ENCODE measurements at regions of chr1 and their contacts with region 1.

Region 1: GRCh38 chr1:19882111-19883071 is at the start of gene OTUD3:
- DNase-seq: peak; percentile 87 to 97 (median 96)
- ATAC-seq: peak; percentile 100
- H3K4me3 ChIP-seq: peak within 1 kb of the TSS; percentile 66
- H3K4me3 Mint-ChIP-seq: peak within 1 kb of the TSS; percentile 77 to 95 (median 88)
- H3K27ac ChIP-seq: peak within 1 kb of the TSS; percentile 82
- H3K27ac Mint-ChIP-seq: peak within 1 kb of the TSS; percentile 3 to 88 (median 75)
- H3K4me1 ChIP-seq: peaks cover 15 to 23% of the 10 kb centered on the region in 2 donors
- H3K4me1 Mint-ChIP-seq: peaks cover 20 to 50% (median 47%) of the 10 kb centered on the region in 7 donors
- H3K27me3 ChIP-seq: no peaks in the 10 kb centered on the region
- H3K27me3 Mint-ChIP-seq: peaks cover 0 to 15% (median 6%) of the 10 kb centered on the region in 5 donors
- total RNA-seq, gene OTUD3: 13.1 to 23.6 (median 20.8) TPM

Region 2: GRCh38 chr1:19054216-19054615 is 828.2 kb before region 1 on chr1:
- CTCF ChIA-PET with region 1: no interaction called
- POLR2A ChIA-PET with region 1: no interaction called
- intact Hi-C with region 1: no loop called
- DNase-seq: no peak
- ATAC-seq: no peak
- H3K4me3 ChIP-seq: no peak overlapping the region
- H3K4me3 Mint-ChIP-seq: no peak overlapping the region
- H3K27ac ChIP-seq: no peak overlapping the region
- H3K27ac Mint-ChIP-seq: no peak overlapping the region
- H3K4me1 ChIP-seq: peaks cover 0 to 10% of the 10 kb centered on the region in 2 donors
- H3K4me1 Mint-ChIP-seq: peaks cover 2 to 17% (median 12%) of the 10 kb centered on the region in 7 donors
- H3K27me3 ChIP-seq: no peaks in the 10 kb centered on the region
- H3K27me3 Mint-ChIP-seq: peaks cover 17 to 56% (median 23%) of the 10 kb centered on the region in 5 donors

Region 3: GRCh38 chr1:19772053-19772452 is 110.3 kb before region 1 on chr1:
- CTCF ChIA-PET with region 1: no interaction called
- POLR2A ChIA-PET with region 1: no interaction called
- intact Hi-C with region 1: no loop called
- DNase-seq: no peak
- ATAC-seq: no peak
- H3K4me3 ChIP-seq: no peak overlapping the region
- H3K4me3 Mint-ChIP-seq: no peak overlapping the region
- H3K27ac ChIP-seq: no peak overlapping the region
- H3K27ac Mint-ChIP-seq: no peak overlapping the region
- H3K4me1 ChIP-seq: no peaks in the 10 kb centered on the region
- H3K4me1 Mint-ChIP-seq: peaks cover 0 to 2% (median 0%) of the 10 kb centered on the region in 7 donors
- H3K27me3 ChIP-seq: no peaks in the 10 kb centered on the region
- H3K27me3 Mint-ChIP-seq: no peaks in the 10 kb centered on the region

Region 4: DNA sequence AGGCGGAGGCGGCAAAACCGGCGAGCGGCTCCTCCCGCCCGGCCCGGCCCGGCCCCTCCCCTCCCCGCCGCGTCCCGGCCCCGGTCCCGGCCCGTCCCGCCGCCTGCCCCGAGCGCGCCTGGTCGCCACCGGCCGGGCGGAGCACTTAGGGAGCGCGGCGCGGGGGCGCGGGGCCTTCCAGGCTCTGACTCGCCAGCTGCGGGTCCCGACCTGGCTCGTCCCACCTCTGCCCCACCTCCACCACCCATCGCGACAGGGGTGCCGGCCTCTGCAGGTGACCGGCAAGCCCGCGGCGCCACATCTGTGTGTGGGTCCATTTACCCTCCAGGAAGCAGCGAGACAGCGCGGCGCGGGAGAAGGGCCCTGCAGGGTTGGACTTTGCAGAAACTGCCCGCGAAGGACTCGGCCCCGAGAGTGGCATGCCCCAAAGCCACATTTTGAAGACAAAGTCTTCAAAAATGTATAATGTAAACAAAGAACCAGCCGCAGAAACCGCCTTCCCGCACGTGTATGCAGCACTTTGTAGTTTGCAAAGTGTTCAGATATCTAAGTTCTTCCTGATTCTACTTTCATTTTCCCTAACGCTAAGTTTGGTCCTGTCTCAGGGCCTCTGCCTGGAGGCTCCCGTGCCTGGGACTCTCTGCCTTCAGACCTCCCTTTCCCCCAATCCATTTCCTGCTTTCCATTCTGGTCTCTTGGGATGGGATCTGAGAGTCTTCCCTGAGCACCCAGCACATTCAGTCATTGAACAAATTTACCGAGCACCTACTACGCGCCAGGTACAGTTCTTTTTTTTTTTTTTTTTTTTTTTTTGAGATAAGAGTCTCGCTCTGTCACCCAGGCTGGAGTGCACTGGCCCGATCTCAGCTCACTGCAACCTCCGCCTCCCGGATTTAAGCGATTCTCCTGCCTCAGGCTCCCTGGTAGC is 82.2 kb before region 1 on chr1 and contains the start of gene TMCO4:
- CTCF ChIA-PET with region 1: no interaction called
- POLR2A ChIA-PET with region 1: no interaction called
- intact Hi-C with region 1: loop called (anchors 1 to 5 kb)
- DNase-seq: peak in 8 of 9 donors; percentile 26 to 64 (median 58)
- ATAC-seq: peak; percentile 68
- H3K4me3 ChIP-seq: peak within 1 kb of the TSS; percentile 66
- H3K4me3 Mint-ChIP-seq: peak within 1 kb of the TSS; percentile 88 to 98 (median 93)
- H3K27ac ChIP-seq: peak within 1 kb of the TSS; percentile 66
- H3K27ac Mint-ChIP-seq: peak within 1 kb of the TSS; percentile 93 to 99 (median 98)
- H3K4me1 ChIP-seq: peaks cover 0 to 10% of the 10 kb centered on the region in 2 donors
- H3K4me1 Mint-ChIP-seq: peaks cover 5 to 35% (median 33%) of the 10 kb centered on the region in 7 donors
- H3K27me3 ChIP-seq: no peaks in the 10 kb centered on the region
- H3K27me3 Mint-ChIP-seq: peaks cover 0 to 8% (median 0%) of the 10 kb centered on the region in 5 donors
- total RNA-seq, gene TMCO4: 16.6 to 28.3 (median 18.2) TPM

Region 5: GRCh38 chr1:20185834-20186782 is 303.7 kb after region 1 on chr1 and contains the starts of genes PLA2G2C and UBXN10:
- CTCF ChIA-PET with region 1: no interaction called
- POLR2A ChIA-PET with region 1: no interaction called
- intact Hi-C with region 1: loop called in 1 of 2 experiments (anchors 1 kb)
- DNase-seq: peak; percentile 19 to 73 (median 49)
- ATAC-seq: peak; percentile 53
- H3K4me3 ChIP-seq: peak within 1 kb of the TSS; percentile 68
- H3K4me3 Mint-ChIP-seq: peak within 1 kb of the TSS; percentile 80 to 91 (median 88)
- H3K27ac ChIP-seq: peak within 1 kb of the TSS; percentile 40
- H3K27ac Mint-ChIP-seq: peak within 1 kb of the TSS; percentile 80 to 90 (median 87)
- H3K4me1 ChIP-seq: peaks cover 19 to 41% of the 10 kb centered on the region in 2 donors
- H3K4me1 Mint-ChIP-seq: peaks cover 42 to 56% (median 56%) of the 10 kb centered on the region in 7 donors
- H3K27me3 ChIP-seq: no peaks in the 10 kb centered on the region
- H3K27me3 Mint-ChIP-seq: peaks cover 0 to 14% (median 0%) of the 10 kb centered on the region in 5 donors
- total RNA-seq, gene PLA2G2C: 0.46 TPM in 1 of 5 experiments, not detected in the others
- total RNA-seq, gene UBXN10: 0.37 to 1.1 (median 0.73) TPM in 3 of 5 experiments, not detected in the others

Measured in naive thymus-derived CD4-positive, alpha-beta T cell (primary cell).